HepG2 (cell line): ENCODE measurements at regions of chr3 and their contacts with region 1.

Region 1: DNA sequence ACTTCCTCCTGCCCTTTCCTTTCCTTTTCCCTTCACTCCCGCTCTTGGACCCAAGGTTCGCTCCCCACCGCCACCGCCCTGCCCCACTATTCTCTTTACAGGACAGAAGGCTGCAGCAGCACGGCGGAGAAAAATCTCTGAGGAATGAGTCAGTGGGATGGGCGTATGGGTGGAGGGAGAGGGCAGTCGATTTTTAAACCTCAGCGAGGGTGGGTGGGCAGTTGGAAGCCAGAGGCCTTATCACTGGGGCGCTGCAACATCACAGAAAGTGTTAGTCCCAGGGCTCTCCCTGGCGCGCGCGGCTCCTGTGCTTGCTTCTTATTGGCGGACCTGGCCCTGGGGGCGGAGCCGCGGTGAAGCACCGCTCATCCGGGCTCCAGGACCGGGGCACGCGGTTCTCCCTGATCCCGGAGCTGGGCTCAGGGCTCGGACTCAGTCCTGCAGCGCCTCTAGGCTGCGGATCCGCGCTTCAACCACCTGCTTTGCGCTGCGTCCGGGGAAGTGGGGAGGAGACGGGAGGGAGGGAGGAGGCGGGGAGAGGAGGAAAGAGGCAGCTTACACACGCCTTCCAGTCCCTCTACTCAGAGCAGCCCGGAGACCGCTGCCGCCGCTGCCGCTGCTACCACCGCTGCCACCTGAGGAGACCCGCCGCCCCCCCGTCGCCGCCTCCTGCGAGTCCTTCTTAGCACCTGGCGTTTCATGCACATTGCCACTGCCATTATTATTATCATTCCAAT is at the start of gene ALCAM:
- DNase-seq: peak; percentile 87
- ATAC-seq: peak; percentile 87
- H3K4me3 ChIP-seq: peak within 1 kb of the TSS; percentile 81 to 91 (median 86)
- H3K27ac ChIP-seq: peak within 1 kb of the TSS; percentile 90
- H3K4me1 ChIP-seq: peaks cover 26% of the 10 kb centered on the region
- H3K27me3 ChIP-seq: no peaks in the 10 kb centered on the region; a peak in 1 of 5 replicates
- CTCF ChIP-seq: peak; percentile 95
- EP300 ChIP-seq: no peak
- POLR2A ChIP-seq: peak in 1 of 2 experiments; percentile 72; a peak in 3 of 4 replicates
- RAD21 ChIP-seq: peak; percentile 93
- total RNA-seq, gene ALCAM: 17.7 and 33.1 TPM in 2 replicates

Region 2: GRCh38 chr3:104564045-104564643 is 802.4 kb before region 1 on chr3:
- CTCF ChIA-PET with region 1: no interaction called
- POLR2A ChIA-PET with region 1: no interaction called
- in situ Hi-C with region 1: no loop called
- intact Hi-C with region 1: loop called (anchors 5 kb)
- DNase-seq: peak; percentile 49
- ATAC-seq: no peak
- H3K4me3 ChIP-seq: no peak overlapping the region
- H3K27ac ChIP-seq: no peak overlapping the region
- H3K4me1 ChIP-seq: no peaks in the 10 kb centered on the region
- H3K27me3 ChIP-seq: no peaks in the 10 kb centered on the region
- CTCF ChIP-seq: peak; percentile 61
- EP300 ChIP-seq: no peak
- POLR2A ChIP-seq: no peak
- RAD21 ChIP-seq: no peak

Region 3: DNA sequence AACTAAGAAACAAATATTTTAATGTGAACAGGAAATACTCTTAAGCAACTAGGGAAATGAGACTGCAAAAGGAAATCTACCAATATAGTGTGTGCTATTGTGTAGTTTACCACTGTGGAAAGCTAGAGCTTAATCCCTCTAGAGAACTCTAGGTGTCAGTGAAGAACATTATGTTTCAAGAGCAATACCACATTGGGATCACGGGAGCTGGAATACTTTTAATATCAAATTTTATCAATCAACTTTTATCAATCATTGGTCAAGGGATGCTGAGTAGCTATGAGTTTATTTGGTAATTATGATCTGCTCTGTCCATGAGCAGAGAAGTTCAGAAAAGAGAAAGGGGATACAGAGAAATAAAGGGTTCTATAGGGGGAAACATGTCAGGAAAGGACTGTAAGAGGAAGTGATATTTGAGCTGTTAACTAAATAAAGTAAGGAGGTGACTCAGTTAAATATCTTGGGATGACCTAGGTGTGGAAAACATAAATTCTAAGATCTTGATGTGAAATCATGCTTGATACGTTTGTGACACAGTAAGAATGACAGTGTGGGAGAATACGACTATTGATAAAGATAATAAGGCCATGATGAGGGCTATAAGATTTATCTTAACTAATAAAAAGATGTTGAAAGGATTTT is 762.0 kb before region 1 on chr3:
- CTCF ChIA-PET with region 1: no interaction called
- POLR2A ChIA-PET with region 1: no interaction called
- in situ Hi-C with region 1: loop called (anchors 25 kb)
- intact Hi-C with region 1: no loop called
- DNase-seq: no peak
- ATAC-seq: 0 out of 3 replicates have a peak, but pooled peaks have one; percentile 41
- H3K4me3 ChIP-seq: no peak overlapping the region
- H3K27ac ChIP-seq: no peak overlapping the region
- H3K4me1 ChIP-seq: peaks cover 10% of the 10 kb centered on the region
- H3K27me3 ChIP-seq: no peaks in the 10 kb centered on the region
- CTCF ChIP-seq: no peak
- EP300 ChIP-seq: no peak
- POLR2A ChIP-seq: no peak
- RAD21 ChIP-seq: no peak

Region 4: GRCh38 chr3:105101603-105102002 is 264.9 kb before region 1 on chr3:
- CTCF ChIA-PET with region 1: no interaction called
- POLR2A ChIA-PET with region 1: no interaction called
- in situ Hi-C with region 1: no loop called
- intact Hi-C with region 1: loop called (anchors 10 kb)
- DNase-seq: no peak
- ATAC-seq: no peak
- H3K4me3 ChIP-seq: no peak overlapping the region
- H3K27ac ChIP-seq: no peak overlapping the region
- H3K4me1 ChIP-seq: no peaks in the 10 kb centered on the region
- H3K27me3 ChIP-seq: no peaks in the 10 kb centered on the region
- CTCF ChIP-seq: no peak
- EP300 ChIP-seq: no peak
- POLR2A ChIP-seq: no peak
- RAD21 ChIP-seq: no peak

Region 5: DNA sequence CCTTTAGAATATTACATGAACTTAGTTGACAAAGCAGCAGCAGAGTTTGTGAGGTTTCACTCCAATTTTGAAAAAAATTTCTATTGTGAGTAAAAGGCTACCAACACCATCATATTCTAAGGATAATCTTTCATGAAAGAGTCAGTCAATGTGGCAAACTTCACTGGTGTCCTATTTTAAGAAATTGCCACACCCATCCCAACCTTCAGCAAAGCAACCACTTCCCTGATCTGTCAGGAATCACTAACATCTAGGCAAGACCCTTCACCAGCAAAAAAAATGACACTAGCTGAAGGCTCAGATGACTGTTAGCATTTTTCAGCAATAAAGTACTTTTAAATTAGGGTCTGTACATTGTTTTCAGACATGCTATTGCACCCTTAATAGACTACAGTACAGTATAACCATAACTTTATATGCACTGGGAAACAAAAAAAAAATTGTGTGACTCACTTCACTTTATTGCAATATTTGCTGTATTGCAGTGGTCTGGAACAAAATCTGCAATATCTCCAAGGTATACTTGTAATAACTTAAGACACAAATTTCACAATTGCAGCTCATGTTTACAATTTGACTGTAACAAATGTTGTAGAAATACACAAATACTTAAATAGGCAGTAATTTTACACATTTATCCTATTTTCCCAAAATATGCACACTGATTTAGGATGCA is 38.7 kb before region 1 on chr3:
- CTCF ChIA-PET with region 1: no interaction called
- POLR2A ChIA-PET with region 1: no interaction called
- in situ Hi-C with region 1: no loop called
- intact Hi-C with region 1: no loop called
- DNase-seq: no peak
- ATAC-seq: no peak
- H3K4me3 ChIP-seq: no peak overlapping the region
- H3K27ac ChIP-seq: no peak overlapping the region
- H3K4me1 ChIP-seq: no peaks in the 10 kb centered on the region
- H3K27me3 ChIP-seq: no peaks in the 10 kb centered on the region
- CTCF ChIP-seq: no peak
- EP300 ChIP-seq: no peak
- POLR2A ChIP-seq: no peak
- RAD21 ChIP-seq: no peak

Region 6: DNA sequence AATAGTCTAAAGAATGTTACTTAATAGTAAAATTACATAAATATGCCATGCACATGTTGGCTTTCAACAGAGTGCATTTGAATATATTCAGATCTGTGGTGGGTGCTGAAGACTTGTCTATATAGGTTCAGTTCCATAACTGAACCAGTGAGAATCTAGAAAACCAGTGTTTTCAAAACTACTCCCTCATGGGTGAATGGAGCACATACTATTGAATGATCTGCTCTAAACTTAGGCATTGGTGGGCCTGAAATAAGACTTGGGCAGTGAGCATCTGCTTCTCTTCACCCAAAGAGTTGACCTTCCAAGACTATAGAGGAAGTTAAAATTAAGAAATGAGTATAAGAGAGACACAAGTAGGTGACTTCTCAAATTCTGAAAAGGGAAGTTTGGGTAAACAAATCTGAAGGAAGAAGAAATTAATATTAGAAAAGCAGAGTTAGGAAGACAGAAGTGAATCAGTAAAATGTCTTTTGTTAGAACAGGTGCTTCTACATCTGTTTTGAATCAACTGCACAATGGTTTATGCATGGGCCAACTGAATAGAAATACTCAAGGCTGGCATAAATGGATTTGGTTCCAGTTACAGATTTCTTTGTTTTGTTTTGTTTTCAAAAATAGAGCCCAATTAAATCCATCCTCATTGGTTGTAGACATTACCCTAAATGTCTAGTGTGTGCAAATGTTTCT is 19.5 kb after region 1 on chr3:
- CTCF ChIA-PET with region 1: interaction called, 3 read pairs
- POLR2A ChIA-PET with region 1: interaction called, 11 read pairs
- in situ Hi-C with region 1: no loop called
- intact Hi-C with region 1: loop called (anchors 1 kb)
- DNase-seq: no peak
- ATAC-seq: no peak
- H3K4me3 ChIP-seq: no peak overlapping the region
- H3K27ac ChIP-seq: peak overlapping the region; percentile 71
- H3K4me1 ChIP-seq: peaks cover 38% of the 10 kb centered on the region
- H3K27me3 ChIP-seq: no peaks in the 10 kb centered on the region
- CTCF ChIP-seq: no peak
- EP300 ChIP-seq: no peak
- POLR2A ChIP-seq: no peak
- RAD21 ChIP-seq: no peak

Region 7: GRCh38 chr3:105513042-105513441 is 146.5 kb after region 1 on chr3:
- CTCF ChIA-PET with region 1: interaction called, 7 read pairs
- POLR2A ChIA-PET with region 1: interaction called, 4 read pairs
- in situ Hi-C with region 1: loop called (anchors 5 kb)
- intact Hi-C with region 1: loop called (anchors 1 kb)
- DNase-seq: no peak
- ATAC-seq: no peak
- H3K4me3 ChIP-seq: no peak overlapping the region
- H3K27ac ChIP-seq: no peak overlapping the region
- H3K4me1 ChIP-seq: no peaks in the 10 kb centered on the region
- H3K27me3 ChIP-seq: no peaks in the 10 kb centered on the region
- CTCF ChIP-seq: no peak
- EP300 ChIP-seq: no peak
- POLR2A ChIP-seq: no peak
- RAD21 ChIP-seq: no peak